Activated B cell treated with CpG ODN at 0.5 μM for 24 hours (primary cell): ENCODE measurements at regions of chr2 and their contacts with region 1.

Region 1: DNA sequence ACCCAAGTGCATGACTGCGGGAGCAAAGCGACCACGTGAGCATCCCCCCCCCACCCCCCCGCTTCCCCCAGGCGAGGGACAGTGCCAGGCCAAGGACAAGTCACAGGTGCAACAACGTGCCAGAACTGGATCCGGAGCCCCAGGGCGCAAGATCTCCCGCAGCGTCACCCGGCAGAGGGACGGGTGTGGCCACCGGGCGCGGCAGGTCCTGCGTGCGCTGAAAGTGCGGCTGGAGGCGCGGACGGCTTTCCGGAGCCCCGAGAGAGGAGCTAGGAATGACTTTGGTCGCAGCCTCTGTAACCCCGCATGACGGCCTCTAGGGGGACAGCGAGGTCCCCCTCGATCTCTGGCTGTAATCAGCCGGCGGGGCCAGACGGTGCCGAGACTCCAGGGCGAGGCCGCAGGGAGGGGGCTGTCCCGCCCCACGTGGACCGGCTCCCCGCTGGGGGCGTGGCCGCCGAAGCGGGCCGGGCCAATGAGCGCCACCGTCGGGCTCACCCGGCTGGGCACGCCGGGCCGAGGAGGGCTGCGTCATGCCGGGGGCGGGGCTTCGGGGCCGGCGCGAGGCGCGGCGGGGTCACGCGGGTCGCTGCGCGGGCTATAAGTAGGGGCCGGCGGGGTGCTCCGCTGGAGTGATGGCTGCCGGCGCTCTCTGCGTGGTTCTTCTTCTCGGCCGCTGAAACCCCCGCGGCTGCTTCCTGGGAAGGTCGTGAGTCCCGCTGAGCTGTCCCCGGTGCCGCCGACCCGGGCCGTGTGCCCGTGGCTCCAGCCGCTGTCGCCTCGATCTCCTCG is at the start of gene SLC20A1:
- DNase-seq: peak; percentile 100
- ATAC-seq: peak; percentile 93
- H3K4me3 Mint-ChIP-seq: peak within 1 kb of the TSS; percentile 89
- H3K27ac Mint-ChIP-seq: peak within 1 kb of the TSS; percentile 88
- H3K4me1 Mint-ChIP-seq: peaks cover 36% of the 10 kb centered on the region
- H3K27me3 Mint-ChIP-seq: no peaks in the 10 kb centered on the region
- CTCF ChIP-seq: no peak
- total RNA-seq, gene SLC20A1: 46.9 and 54.6 TPM in 2 replicates

Region 2: DNA sequence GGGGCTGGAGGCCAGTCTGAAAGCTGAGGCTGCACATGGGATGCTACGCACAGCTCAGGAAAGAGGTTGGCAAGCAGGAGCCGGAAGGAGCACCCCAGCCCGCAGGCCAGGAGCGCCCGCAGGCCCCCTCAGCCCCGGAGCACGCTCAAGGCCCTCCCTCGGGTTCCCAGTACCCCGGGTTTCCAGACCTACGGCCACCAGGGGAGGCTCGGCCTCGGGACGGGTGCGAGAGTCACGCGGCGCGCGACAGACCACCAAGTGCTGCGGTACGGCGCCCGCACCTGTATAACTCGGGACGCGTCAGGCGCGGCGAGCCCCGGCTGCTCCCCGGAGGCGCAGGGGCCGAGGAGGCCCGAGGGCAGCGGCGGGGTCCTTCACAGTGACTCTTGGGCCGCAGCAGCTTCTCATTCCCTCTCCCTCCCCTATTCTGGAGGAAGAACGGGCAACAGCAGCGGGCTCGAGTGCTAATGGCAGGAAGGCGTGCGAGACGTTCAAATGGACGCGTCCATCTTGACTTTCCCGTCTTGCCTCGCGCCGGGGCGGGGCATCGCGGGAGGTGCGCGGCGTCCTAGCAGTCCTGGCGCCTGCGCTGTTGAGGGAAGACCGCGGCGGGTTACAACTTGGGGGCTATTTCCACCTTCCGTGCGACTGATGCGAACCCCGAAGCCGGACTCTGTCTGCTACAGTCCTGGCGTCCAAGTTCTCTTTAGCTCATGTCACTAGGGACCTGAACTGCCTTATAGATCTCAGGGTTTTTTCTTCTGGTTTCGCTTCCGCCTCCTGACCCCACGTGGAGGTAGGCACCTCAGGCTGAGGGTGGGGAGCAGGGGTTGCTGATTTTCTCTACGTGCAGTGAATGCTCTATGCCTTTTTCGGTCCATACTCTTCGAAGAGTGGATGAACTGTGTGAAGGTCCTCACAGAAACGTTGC is 761.6 kb before region 1 on chr2 and contains the start of gene ANAPC1:
- CTCF ChIA-PET with region 1: no interaction called
- POLR2A ChIA-PET with region 1: no interaction called
- intact Hi-C with region 1: loop called (anchors 10 kb)
- DNase-seq: peak; percentile 79
- ATAC-seq: peak; percentile 91
- H3K4me3 Mint-ChIP-seq: peak within 1 kb of the TSS; percentile 92
- H3K27ac Mint-ChIP-seq: peak within 1 kb of the TSS; percentile 94
- H3K4me1 Mint-ChIP-seq: peaks cover 11% of the 10 kb centered on the region
- H3K27me3 Mint-ChIP-seq: no peaks in the 10 kb centered on the region
- CTCF ChIP-seq: no peak
- total RNA-seq, gene ANAPC1: 74.0 and 88.1 TPM in 2 replicates

Region 3: DNA sequence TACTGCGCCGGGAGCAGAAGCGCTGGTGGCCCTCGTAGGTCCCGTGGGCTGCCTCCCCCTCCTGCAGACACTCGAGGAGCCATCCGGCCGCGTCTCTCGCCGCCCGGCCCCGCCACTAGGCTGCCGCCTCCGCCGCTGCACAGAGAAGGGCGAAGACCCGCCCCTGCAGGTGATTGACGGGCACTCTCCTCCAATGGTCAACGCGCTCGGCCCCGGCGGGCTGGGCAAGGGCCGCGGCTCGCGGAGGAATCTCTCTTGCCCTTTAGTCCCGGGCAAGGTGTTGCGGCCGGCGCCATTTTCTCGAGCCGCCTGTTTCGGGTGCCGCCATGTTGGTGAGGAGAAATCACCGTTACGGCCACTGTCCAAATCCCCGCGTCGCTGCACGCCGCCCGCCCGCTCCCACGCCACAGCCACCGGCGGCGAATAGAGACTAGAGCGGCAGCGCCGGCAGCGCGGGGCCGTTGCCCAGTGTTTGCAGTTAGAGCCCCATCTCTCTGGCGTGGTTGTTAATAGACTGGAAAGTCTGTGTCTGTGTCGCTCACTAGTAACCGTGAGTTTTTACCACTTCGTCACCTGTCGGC is 370.1 kb before region 1 on chr2 and contains the start of gene ZC3H6:
- CTCF ChIA-PET with region 1: no interaction called
- POLR2A ChIA-PET with region 1: no interaction called
- intact Hi-C with region 1: loop called (anchors 10 kb)
- DNase-seq: peak; percentile 100
- ATAC-seq: peak; percentile 88
- H3K4me3 Mint-ChIP-seq: peak within 1 kb of the TSS; percentile 95
- H3K27ac Mint-ChIP-seq: peak within 1 kb of the TSS; percentile 99
- H3K4me1 Mint-ChIP-seq: peaks cover 17% of the 10 kb centered on the region
- H3K27me3 Mint-ChIP-seq: no peaks in the 10 kb centered on the region
- CTCF ChIP-seq: no peak
- total RNA-seq, gene ZC3H6: 7.0 and 7.3 TPM in 2 replicates

Region 4: DNA sequence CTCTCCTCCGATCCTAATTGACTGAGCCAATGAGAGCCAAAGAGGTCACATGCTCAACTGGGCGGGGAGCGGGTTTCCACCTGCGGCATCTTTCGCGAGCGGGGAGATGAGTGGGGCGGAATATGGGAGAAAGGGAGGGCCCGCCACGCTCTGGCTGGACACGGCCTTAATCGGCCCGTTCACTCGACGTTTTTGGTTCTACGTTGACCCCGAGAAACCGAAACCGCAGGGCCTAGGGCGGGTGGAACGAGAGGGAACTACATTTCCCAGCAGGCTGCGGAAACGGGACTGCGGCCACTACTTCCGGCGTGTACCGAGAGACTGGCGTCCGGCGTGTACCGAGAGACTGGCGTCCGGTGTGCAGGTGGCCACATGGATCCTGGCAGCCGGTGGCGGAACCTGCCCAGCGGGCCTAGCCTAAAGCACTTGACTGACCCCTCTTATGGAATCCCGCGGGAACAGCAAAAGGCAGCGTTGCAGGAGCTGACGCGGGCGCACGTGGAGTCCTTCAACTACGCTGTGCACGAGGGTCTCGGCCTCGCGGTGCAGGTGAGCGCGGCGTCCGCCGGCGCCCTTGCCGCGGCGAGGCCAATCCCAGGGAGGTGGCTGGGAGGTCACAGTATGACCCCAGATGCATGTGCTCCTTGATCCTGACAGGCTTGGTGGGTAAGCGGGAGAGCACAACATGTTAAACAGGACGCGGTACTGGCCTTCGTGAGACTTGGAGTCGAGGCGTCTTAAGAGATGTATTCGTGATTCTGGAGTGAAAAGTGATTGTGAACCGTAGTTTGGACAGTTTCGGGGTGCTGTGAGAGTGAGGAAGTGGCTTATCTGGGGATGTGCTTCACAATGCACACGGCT is 103.2 kb before region 1 on chr2 and contains the start of gene POLR1B:
- CTCF ChIA-PET with region 1: no interaction called
- POLR2A ChIA-PET with region 1: no interaction called
- intact Hi-C with region 1: loop called (anchors 1 kb)
- DNase-seq: peak; percentile 72
- ATAC-seq: peak; percentile 77
- H3K4me3 Mint-ChIP-seq: no peak within 1 kb of the TSS
- H3K27ac Mint-ChIP-seq: no peak within 1 kb of the TSS
- H3K4me1 Mint-ChIP-seq: peaks cover 19% of the 10 kb centered on the region
- H3K27me3 Mint-ChIP-seq: no peaks in the 10 kb centered on the region
- CTCF ChIP-seq: no peak
- total RNA-seq, gene POLR1B: 43.1 and 48.8 TPM in 2 replicates

Region 5: DNA sequence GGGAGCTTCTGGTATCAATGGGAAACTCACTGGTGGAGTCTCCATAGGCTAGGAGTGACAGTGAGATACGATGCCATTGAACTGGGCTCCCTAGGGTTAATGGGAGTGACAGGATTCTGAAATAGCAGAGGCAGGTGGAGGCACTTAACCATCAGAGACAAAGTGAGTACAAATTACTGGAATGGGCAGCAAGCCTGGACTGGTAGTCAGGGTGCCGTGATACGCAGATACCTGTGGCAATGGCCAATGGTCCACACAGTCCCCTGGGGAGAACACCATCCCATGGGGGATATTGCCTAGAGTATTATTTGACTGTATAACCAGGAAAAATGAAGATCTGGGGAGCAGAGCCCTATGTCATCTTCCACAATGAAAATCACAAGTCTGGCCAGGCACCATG is 43.8 kb before region 1 on chr2:
- CTCF ChIA-PET with region 1: interaction called, 3 read pairs
- POLR2A ChIA-PET with region 1: no interaction called
- intact Hi-C with region 1: loop called (anchors 1 kb)
- DNase-seq: no peak
- ATAC-seq: no peak
- H3K4me3 Mint-ChIP-seq: no peak overlapping the region
- H3K27ac Mint-ChIP-seq: no peak overlapping the region
- H3K4me1 Mint-ChIP-seq: peaks cover 6% of the 10 kb centered on the region
- H3K27me3 Mint-ChIP-seq: no peaks in the 10 kb centered on the region
- CTCF ChIP-seq: no peak

Region 6: GRCh38 chr2:112692496-112692911 is 47.0 kb after region 1 on chr2:
- CTCF ChIA-PET with region 1: interaction called, 4 read pairs
- POLR2A ChIA-PET with region 1: interaction called, 9 read pairs
- intact Hi-C with region 1: loop called (anchors 1 kb)
- DNase-seq: no peak
- ATAC-seq: peak; percentile 43
- H3K4me3 Mint-ChIP-seq: no peak overlapping the region
- H3K27ac Mint-ChIP-seq: peak overlapping the region; percentile 37
- H3K4me1 Mint-ChIP-seq: peaks cover 17% of the 10 kb centered on the region
- H3K27me3 Mint-ChIP-seq: no peaks in the 10 kb centered on the region
- CTCF ChIP-seq: no peak

Region 7: DNA sequence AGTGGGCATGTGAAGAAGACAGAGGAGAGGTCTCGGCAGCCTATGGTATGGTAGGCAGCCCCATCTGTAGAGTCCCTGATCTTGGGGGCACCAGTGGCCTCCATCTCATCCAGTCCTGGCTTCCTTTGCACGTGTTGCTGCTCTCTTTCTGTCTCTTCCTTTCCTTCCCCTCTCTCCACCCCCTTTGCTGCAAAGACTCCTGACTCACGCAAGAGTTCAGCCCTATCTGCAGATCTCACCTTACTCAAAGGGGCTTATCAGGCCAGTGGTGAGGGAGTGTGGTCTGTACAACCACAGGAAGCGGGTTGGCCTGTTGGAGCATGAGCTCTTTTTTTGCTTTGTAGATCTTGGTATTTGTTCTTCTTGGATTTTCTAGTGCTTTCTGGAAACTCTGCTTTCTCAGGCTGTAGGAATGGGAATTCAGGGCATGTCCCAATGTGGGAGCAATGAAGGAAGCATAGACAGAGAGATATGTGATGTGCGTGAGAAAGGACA is 60.7 kb after region 1 on chr2:
- CTCF ChIA-PET with region 1: interaction called, 10 read pairs
- POLR2A ChIA-PET with region 1: interaction called, 57 read pairs
- intact Hi-C with region 1: loop called (anchors 1 kb)
- DNase-seq: no peak
- ATAC-seq: peak; percentile 56
- H3K4me3 Mint-ChIP-seq: peak overlapping the region; percentile 58
- H3K27ac Mint-ChIP-seq: peak overlapping the region; percentile 85
- H3K4me1 Mint-ChIP-seq: peaks cover 85% of the 10 kb centered on the region
- H3K27me3 Mint-ChIP-seq: no peaks in the 10 kb centered on the region
- CTCF ChIP-seq: no peak